ENCODE measurements at regions of chr2 and their contacts with region 1.

Region 1: GRCh38 chr2:68467077-68467960 is at the starts of genes APLF and FBXO48:
- DNase-seq: peak; percentile 97 to 99 (median 98)
- ATAC-seq: peak; percentile 99
- H3K4me3 ChIP-seq: peak within 1 kb of the TSS; percentile 89
- H3K27ac ChIP-seq: peak within 1 kb of the TSS; percentile 85
- H3K4me1 ChIP-seq: peaks cover 3% of the 10 kb centered on the region
- H3K27me3 ChIP-seq: no peaks in the 10 kb centered on the region
- total RNA-seq, gene APLF: 6.2 to 7.6 (median 6.7) TPM
- total RNA-seq, gene FBXO48: 0.42 to 1.1 (median 0.95) TPM

Region 2: GRCh38 chr2:68336192-68336591 is 131.1 kb before region 1 on chr2:
- intact Hi-C with region 1: no loop called
- DNase-seq: no peak
- ATAC-seq: no peak
- H3K4me3 ChIP-seq: no peak overlapping the region
- H3K27ac ChIP-seq: no peak overlapping the region
- H3K4me1 ChIP-seq: no peaks in the 10 kb centered on the region
- H3K27me3 ChIP-seq: no peaks in the 10 kb centered on the region

Region 3: GRCh38 chr2:68715353-68716041 is 248.2 kb after region 1 on chr2:
- intact Hi-C with region 1: loop called in 1 of 4 experiments (anchors 10 kb)
- DNase-seq: peak in 2 of 3 donors; percentile 29 to 70
- ATAC-seq: peak; percentile 59 to 69
- H3K4me3 ChIP-seq: no peak overlapping the region
- H3K27ac ChIP-seq: no peak overlapping the region
- H3K4me1 ChIP-seq: no peaks in the 10 kb centered on the region
- H3K27me3 ChIP-seq: no peaks in the 10 kb centered on the region